HepG2 (cell line): ENCODE measurements at regions of chr16 and their contacts with region 1.

Region 1: GRCh38 chr16:23141959-23142740 is 7.1 kb downstream of the USP31 start:
- DNase-seq: peak; percentile 84
- ATAC-seq: peak; percentile 90
- H3K4me3 ChIP-seq: peak overlapping the region; percentile 18 to 65 (median 38)
- H3K27ac ChIP-seq: peak overlapping the region; percentile 81
- H3K4me1 ChIP-seq: peaks cover 94% of the 10 kb centered on the region
- H3K27me3 ChIP-seq: no peaks in the 10 kb centered on the region
- CTCF ChIP-seq: no peak
- EP300 ChIP-seq: peak in 1 of 2 experiments; percentile 19; a peak in 1 of 4 replicates
- POLR2A ChIP-seq: 0 out of 4 replicates have a peak, but pooled peaks have one; percentile 16 to 33
- RAD21 ChIP-seq: 0 out of 2 replicates have a peak, but pooled peaks have one; percentile 8

Region 2: DNA sequence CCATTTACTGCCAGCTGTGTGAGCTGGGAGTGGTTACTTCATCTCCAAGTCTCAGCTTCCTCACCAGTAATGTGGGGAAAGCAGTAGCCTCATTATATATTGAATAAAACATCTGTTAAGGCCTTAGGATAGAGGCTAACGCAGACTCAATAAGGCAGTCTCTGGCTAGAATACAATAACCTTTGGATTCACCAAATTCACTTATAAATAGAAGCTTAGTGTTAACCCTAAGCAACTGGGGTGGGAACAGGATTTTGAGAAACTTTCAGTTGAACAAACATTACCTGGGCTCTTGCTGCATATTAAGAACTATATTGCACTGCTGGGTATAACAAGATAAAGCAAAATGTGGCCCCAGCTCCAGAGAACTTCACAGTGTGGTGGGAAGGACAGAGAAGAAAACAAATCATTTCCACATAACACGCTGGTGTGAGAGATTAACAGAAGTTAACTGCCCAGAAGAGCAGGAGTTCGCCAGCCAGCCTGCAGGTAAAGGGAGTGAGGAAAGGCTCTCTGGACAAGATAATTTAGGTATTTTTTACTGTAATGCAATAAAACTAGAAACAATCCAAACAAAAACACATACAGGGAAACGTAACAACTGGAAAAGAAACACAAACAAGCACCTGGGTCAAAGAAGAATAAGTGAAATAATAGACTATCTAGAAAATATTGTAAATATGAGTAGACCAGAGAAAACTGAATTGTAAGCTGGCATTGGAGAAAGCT is 49.9 kb before region 1 on chr16:
- CTCF ChIA-PET with region 1: no interaction called
- POLR2A ChIA-PET with region 1: interaction called, 21 read pairs
- in situ Hi-C with region 1: loop called (anchors 10 kb)
- intact Hi-C with region 1: loop called (anchors 5 kb)
- DNase-seq: no peak
- ATAC-seq: peak; percentile 73
- H3K4me3 ChIP-seq: peak overlapping the region in 2 of 3 experiments; percentile 5 to 29; a peak in 2 of 6 replicates
- H3K27ac ChIP-seq: peak overlapping the region; percentile 67
- H3K4me1 ChIP-seq: peaks cover 55% of the 10 kb centered on the region
- H3K27me3 ChIP-seq: no peaks in the 10 kb centered on the region
- CTCF ChIP-seq: no peak
- EP300 ChIP-seq: no peak
- POLR2A ChIP-seq: no peak
- RAD21 ChIP-seq: no peak

Region 3: DNA sequence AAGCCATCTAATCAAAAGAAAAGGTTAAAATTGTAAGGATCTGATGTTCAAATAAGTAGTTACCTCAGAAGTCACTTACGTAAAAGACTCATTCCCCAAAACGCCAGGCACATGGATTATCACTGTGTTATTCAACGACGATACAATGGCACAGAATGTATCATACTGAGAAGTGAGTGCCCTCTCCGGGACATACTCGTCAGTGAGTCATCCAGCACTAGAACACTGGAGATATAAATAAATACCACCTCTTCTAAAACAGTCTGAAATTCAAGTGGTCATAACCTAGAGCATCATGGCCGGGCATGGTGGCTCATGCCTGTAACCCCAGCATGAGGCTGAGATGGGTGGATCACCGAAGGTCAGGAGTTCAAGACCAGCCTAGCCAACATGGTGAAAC is 17.8 kb before region 1 on chr16:
- CTCF ChIA-PET with region 1: no interaction called
- POLR2A ChIA-PET with region 1: interaction called, 3 read pairs
- in situ Hi-C with region 1: no loop called
- intact Hi-C with region 1: loop called (anchors 2 kb)
- DNase-seq: no peak
- ATAC-seq: no peak
- H3K4me3 ChIP-seq: no peak overlapping the region
- H3K27ac ChIP-seq: no peak overlapping the region
- H3K4me1 ChIP-seq: peaks cover 36% of the 10 kb centered on the region
- H3K27me3 ChIP-seq: no peaks in the 10 kb centered on the region
- CTCF ChIP-seq: no peak
- EP300 ChIP-seq: no peak
- POLR2A ChIP-seq: no peak
- RAD21 ChIP-seq: no peak

Region 4: GRCh38 chr16:23131931-23132621 is 10.1 kb before region 1 on chr16:
- CTCF ChIA-PET with region 1: no interaction called
- POLR2A ChIA-PET with region 1: interaction called, 20 read pairs
- in situ Hi-C with region 1: no loop called
- intact Hi-C with region 1: loop called (anchors 2 kb)
- DNase-seq: no peak
- ATAC-seq: peak; percentile 49
- H3K4me3 ChIP-seq: no peak overlapping the region
- H3K27ac ChIP-seq: peak overlapping the region; percentile 16
- H3K4me1 ChIP-seq: peaks cover 69% of the 10 kb centered on the region
- H3K27me3 ChIP-seq: no peaks in the 10 kb centered on the region
- CTCF ChIP-seq: no peak
- EP300 ChIP-seq: no peak
- POLR2A ChIP-seq: no peak
- RAD21 ChIP-seq: no peak